Pancreas (tissue), 10 donors: ENCODE measurements at regions of chr20 and their contacts with region 1.

Region 1: GRCh38 chr20:37564388-37565133 is 36.9 kb upstream of the BLCAP start:
- DNase-seq: peak in 5 of 6 donors; percentile 8 to 88 (median 59)
- ATAC-seq: peak; percentile 53 to 88 (median 87)
- H3K4me3 ChIP-seq: no peak overlapping the region
- H3K27ac ChIP-seq: no peak overlapping the region
- H3K4me1 ChIP-seq: no peaks in the 10 kb centered on the region
- H3K27me3 ChIP-seq: peaks cover 0 to 15% (median 0%) of the 10 kb centered on the region in 4 donors
- CTCF ChIP-seq: peak; percentile 61 to 89 (median 82)

Region 2: DNA sequence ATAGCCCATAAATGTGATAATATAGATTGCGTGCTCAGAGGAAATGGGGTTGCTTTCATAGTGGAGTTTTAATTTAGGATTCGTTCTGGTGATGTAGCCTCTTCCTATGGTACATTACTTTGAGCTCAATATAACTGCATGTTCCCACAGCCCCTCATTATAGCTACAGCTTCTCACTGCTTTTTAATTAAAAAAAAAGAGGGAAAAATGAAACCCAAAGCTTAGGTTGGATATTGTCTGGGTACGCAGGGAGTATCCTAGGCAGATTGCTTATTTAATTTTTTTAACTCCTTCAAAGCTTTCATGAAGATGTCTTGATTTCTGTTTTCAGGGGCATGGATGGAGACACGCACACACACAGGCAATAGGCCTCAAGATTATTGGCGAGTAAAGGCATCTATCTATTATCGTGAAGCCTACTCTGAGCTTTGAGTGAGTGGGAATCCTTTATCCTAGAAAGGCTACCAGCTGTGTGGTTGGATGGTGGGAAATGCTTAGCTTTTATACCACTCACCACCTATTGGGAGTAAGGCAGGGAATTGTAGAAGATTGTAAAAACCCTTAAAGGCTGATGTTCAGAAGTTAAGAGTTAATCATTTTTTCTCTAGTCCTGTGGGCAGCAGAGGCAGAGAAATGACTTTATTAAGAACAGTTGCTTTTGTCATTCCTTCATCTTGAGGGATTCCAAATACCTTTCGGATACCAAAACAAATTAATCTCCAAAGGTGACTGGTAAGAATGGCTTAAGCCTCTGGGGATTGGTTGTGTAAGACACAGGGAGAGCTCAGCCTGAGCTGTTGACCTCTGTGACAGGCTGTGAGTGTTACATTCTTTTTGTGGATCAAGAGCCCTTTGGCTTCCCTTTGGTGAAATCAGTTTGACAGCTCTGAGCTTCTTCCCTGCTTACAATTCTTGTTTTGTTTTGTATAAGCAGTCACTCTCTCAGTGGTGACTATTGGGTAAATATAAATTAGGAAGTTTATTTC is 162.7 kb after region 1 on chr20:
- intact Hi-C with region 1: no loop called
- DNase-seq: no peak
- ATAC-seq: no peak
- H3K4me3 ChIP-seq: no peak overlapping the region
- H3K27ac ChIP-seq: no peak overlapping the region
- H3K4me1 ChIP-seq: peaks cover 0 to 12% (median 8%) of the 10 kb centered on the region in 3 donors
- H3K27me3 ChIP-seq: no peaks in the 10 kb centered on the region
- CTCF ChIP-seq: no peak

Region 3: GRCh38 chr20:37990571-37991151 is 426.1 kb after region 1 on chr20:
- intact Hi-C with region 1: loop called in 1 of 3 experiments (anchors 5 kb)
- DNase-seq: no peak
- ATAC-seq: peak in 3 of 4 donors; percentile 35 to 43 (median 38)
- H3K4me3 ChIP-seq: no peak overlapping the region
- H3K27ac ChIP-seq: peak overlapping the region in 2 of 4 donors; percentile 16 to 24
- H3K4me1 ChIP-seq: peaks cover 0 to 23% (median 11%) of the 10 kb centered on the region in 3 donors
- H3K27me3 ChIP-seq: no peaks in the 10 kb centered on the region
- CTCF ChIP-seq: no peak

Region 4: GRCh38 chr20:38221119-38221589 is 656.6 kb after region 1 on chr20:
- intact Hi-C with region 1: loop called in 1 of 3 experiments (anchors 5 kb)
- DNase-seq: peak; percentile 23 to 89 (median 64)
- ATAC-seq: peak; percentile 56 to 84 (median 82)
- H3K4me3 ChIP-seq: no peak overlapping the region
- H3K27ac ChIP-seq: no peak overlapping the region
- H3K4me1 ChIP-seq: no peaks in the 10 kb centered on the region
- H3K27me3 ChIP-seq: no peaks in the 10 kb centered on the region
- CTCF ChIP-seq: peak; percentile 63 to 82 (median 80)